Calu3 (cell line): ENCODE measurements at regions of chr5 and their contacts with region 1.

Region 1: DNA sequence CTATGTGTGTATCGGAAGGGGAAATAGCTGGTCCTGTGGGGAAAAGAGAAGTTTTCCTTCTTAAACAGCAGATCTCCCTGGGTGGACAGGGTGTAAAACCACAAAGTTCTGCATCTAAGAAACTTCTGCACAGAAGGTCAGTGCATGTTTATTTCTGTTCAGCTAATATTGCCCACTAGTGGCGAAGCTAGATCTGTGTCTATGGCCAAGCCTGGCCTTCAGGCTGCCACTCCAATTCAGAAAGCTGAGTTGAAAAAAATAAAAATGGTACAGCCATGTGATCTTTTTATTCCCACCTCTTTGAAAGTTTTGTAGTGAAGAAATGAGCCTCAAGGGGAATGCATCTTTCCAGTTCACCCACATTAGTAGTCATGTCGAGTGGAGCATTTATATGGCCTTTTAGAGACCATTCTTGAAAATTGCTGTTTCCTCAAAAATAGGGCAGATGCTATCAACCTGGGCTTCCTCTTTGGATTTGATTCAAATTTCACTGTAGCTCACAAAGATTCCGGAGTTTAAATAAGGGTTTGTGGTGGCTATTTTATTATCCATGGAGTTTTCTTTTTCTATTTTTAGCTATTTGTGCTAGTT is 488.0 kb downstream of the PRELID2 start:
- DNase-seq: peak; percentile 43
- H3K4me3 Mint-ChIP-seq: no peak overlapping the region
- H3K27ac Mint-ChIP-seq: no peak overlapping the region
- H3K4me1 Mint-ChIP-seq: no peaks in the 10 kb centered on the region
- H3K27me3 Mint-ChIP-seq: no peaks in the 10 kb centered on the region
- CTCF ChIP-seq: peak; percentile 49

Region 2: GRCh38 chr5:144484124-144484897 is 862.8 kb before region 1 on chr5:
- CTCF ChIA-PET with region 1: no interaction called
- intact Hi-C with region 1: loop called (anchors 10 kb)
- DNase-seq: no peak
- H3K4me3 Mint-ChIP-seq: no peak overlapping the region
- H3K27ac Mint-ChIP-seq: no peak overlapping the region
- H3K4me1 Mint-ChIP-seq: no peaks in the 10 kb centered on the region
- H3K27me3 Mint-ChIP-seq: no peaks in the 10 kb centered on the region
- CTCF ChIP-seq: no peak

Region 3: DNA sequence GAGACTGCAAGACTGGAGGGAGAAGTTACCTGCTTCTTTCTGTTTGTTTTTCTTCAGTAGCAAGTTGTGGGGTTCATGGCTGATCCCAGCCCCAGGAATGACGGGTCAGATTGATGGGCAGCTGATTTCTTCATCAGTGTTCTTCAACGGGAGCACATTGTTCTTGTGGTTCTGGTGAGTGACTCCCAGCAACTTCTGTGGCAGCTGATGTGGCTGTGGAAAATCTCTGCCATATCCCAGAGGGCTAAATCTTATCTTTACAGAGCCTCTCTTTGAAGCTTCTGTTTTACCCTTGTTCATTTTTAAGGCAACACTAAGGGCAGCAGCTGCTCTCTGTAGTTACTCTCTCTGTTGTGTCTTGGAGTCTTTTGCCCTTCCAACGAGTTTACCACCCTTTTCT is 222.3 kb before region 1 on chr5:
- CTCF ChIA-PET with region 1: no interaction called
- intact Hi-C with region 1: no loop called
- DNase-seq: no peak
- H3K4me3 Mint-ChIP-seq: no peak overlapping the region
- H3K27ac Mint-ChIP-seq: no peak overlapping the region
- H3K4me1 Mint-ChIP-seq: no peaks in the 10 kb centered on the region
- H3K27me3 Mint-ChIP-seq: no peaks in the 10 kb centered on the region
- CTCF ChIP-seq: no peak

Region 4: GRCh38 chr5:145246961-145247744 is 100.0 kb before region 1 on chr5:
- CTCF ChIA-PET with region 1: no interaction called
- intact Hi-C with region 1: loop called (anchors 5 kb)
- DNase-seq: no peak
- H3K4me3 Mint-ChIP-seq: no peak overlapping the region
- H3K27ac Mint-ChIP-seq: peak overlapping the region; percentile 25
- H3K4me1 Mint-ChIP-seq: peaks cover 30% of the 10 kb centered on the region
- H3K27me3 Mint-ChIP-seq: no peaks in the 10 kb centered on the region
- CTCF ChIP-seq: no peak